ENCODE measurements at regions of chr16 and their contacts with region 1.

Region 1: DNA sequence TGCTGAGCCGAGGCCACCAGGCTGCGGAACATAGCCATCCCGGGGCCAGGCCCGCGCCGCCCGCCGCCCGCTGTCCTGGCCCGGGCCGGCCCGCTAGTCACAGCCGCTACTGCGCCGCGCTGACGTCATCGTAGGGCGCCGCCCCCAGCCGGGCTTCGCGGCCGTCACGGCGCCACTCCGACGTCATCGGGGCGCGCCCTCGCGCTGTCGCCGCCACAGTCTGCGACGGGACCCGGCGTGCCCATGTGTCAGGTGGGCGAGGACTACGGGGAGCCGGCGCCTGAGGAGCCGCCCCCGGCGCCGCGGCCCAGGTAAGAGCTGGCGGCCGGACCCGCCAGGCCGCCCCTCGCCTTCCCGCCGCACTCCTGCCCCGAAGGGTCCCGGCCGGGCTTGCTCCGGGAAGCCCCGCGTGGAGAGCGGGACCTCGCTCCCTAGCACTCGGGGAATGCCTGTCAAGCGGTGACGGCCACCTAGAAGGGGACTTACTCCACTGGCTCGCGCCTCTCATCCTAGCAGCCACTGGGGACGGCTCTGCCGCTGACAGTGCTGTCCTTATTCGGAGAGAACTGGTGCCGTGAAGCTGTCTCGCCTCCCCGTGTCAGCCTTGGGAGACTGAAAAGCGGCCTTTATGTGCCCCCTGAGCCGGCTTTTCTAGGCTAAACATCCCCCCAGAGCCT is at the starts of genes CTU2 and RNF166:
- DNase-seq: peak; percentile 80 to 86
- ATAC-seq: peak; percentile 91 to 92
- H3K4me3 ChIP-seq: peak within 1 kb of the TSS; percentile 68 to 99 (median 81)
- H3K27ac ChIP-seq: peak within 1 kb of the TSS; percentile 80 to 95 (median 88)
- H3K4me1 ChIP-seq: peaks cover 23 to 33% of the 10 kb centered on the region in 2 donors
- H3K27me3 ChIP-seq: no peaks in the 10 kb centered on the region
- CTCF ChIP-seq: peak in 2 of 5 experiments; percentile 43 to 68
- POLR2A ChIP-seq: peak; percentile 96 to 99
- total RNA-seq, gene CTU2: 11.1 to 17.7 (median 14.1) TPM
- total RNA-seq, gene RNF166: 22.9 to 32.5 (median 26.1) TPM

Region 2: DNA sequence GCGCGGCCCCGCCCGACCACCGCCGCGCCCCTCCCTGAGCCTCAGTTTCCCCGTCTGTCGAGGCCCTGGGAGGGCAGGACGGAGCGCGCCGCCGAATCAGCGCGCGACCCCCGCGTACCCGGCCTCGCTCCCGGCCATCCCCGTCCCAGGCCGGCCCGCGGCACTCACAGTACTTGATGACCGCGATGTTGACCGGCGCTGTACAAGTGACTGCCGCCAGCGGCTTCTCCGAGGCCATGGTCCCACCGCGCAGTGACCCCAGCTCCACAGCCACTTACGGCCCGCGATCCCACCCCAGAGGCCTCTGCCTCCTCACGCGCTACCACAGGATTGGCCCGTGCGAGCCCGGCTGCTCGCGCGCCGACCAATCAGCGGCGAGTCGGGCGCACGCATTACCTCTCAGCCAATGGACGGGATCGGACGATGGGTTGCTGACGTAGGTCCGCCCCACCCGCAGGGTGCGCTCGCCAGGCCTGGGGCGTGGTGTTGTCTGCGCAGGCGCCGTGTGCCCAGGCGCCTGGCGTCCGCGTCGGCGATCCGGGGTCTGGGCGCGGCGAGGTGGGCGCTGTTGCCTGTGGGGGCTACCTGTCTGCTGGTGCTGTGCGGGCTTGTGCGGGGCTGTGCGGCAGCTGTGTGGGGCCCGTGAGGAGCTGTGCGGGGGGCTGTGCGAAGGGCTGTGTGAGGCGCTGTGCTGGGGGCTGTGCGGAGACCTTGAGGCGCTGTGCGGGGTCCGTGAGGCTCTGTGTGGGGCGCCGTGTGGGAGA is 43.4 kb before region 1 on chr16 and contains the start of gene MVD:
- in situ Hi-C with region 1: no loop called
- intact Hi-C with region 1: loop called (anchors 1 kb)
- DNase-seq: peak; percentile 97
- ATAC-seq: peak; percentile 96 to 98
- H3K4me3 ChIP-seq: peak within 1 kb of the TSS; percentile 74 to 98 (median 82)
- H3K27ac ChIP-seq: peak within 1 kb of the TSS; percentile 86 to 90 (median 90)
- H3K4me1 ChIP-seq: peaks cover 15 to 23% of the 10 kb centered on the region in 2 donors
- H3K27me3 ChIP-seq: no peaks in the 10 kb centered on the region
- CTCF ChIP-seq: no peak
- POLR2A ChIP-seq: peak; percentile 90 to 92
- total RNA-seq, gene MVD: 9.0 to 16.3 (median 13.4) TPM

Region 3: GRCh38 chr16:88686439-88687253 is 19.8 kb before region 1 on chr16 and contains the start of gene SNAI3:
- in situ Hi-C with region 1: no loop called
- intact Hi-C with region 1: loop called (anchors 2 kb)
- DNase-seq: peak; percentile 78 to 87
- ATAC-seq: peak; percentile 80
- H3K4me3 ChIP-seq: peak within 1 kb of the TSS; percentile 68 to 83 (median 75)
- H3K27ac ChIP-seq: peak within 1 kb of the TSS; percentile 82 to 96 (median 88)
- H3K4me1 ChIP-seq: peaks cover 16 to 31% of the 10 kb centered on the region in 2 donors
- H3K27me3 ChIP-seq: no peaks in the 10 kb centered on the region
- CTCF ChIP-seq: no peak
- POLR2A ChIP-seq: peak; percentile 73 to 75
- total RNA-seq, gene SNAI3: 1.2 to 2.2 (median 1.6) TPM

Region 4: DNA sequence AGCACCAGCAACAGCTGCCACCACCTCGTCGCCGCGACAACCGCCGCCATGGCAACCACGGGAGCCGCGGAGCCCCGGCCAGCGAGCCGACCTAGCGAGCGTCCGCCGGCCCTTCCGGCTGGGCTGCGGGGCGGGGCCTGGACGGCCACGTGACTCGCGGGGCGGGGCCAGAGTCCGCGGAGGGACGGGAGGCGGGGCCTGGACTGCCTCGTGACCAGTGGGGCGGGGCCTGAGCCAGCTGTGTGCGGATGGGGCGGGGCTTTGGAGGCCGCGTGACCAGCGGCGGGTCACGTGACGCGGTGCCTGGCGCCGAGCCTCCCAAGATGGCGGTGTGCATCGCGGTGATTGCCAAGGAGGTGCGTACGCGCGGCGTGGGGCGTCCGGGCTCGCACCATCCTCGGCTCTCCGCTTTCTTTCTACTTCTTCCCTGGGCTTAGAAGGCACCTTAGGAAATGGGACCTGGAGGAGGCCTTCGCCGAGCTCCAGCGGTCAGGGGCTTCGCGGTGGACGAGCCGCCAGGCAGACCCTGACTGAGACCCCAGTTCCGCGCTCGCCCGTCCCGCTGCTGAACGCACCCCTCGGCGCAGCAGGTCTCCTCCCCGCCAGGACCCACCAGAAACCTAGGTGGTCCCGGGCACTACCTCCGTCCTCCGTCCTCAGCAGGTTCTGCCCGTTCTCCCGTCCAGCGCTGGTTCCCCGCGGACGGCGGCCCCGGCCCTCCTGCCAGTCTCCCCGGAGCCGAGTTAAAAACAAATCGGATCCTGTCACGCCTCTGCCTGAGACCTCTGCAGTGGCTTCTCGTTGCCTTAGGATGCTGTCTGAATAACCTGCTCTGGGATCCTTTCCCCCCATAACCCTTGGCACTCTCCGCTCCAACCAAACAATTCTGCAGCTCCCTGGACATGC is 150.7 kb after region 1 on chr16 and contains the starts of genes GALNS and TRAPPC2L:
- in situ Hi-C with region 1: no loop called
- intact Hi-C with region 1: loop called (anchors 10 kb)
- DNase-seq: peak; percentile 97
- ATAC-seq: peak; percentile 92 to 95
- H3K4me3 ChIP-seq: peak within 1 kb of the TSS; percentile 91 to 99 (median 94)
- H3K27ac ChIP-seq: peak within 1 kb of the TSS; percentile 89 to 92 (median 90)
- H3K4me1 ChIP-seq: peaks cover 16 to 17% of the 10 kb centered on the region in 2 donors
- H3K27me3 ChIP-seq: no peaks in the 10 kb centered on the region
- CTCF ChIP-seq: peak in 2 of 5 experiments; percentile 44 to 54
- POLR2A ChIP-seq: peak; percentile 79 to 81
- total RNA-seq, gene GALNS: 8.8 to 14.7 (median 10.0) TPM
- total RNA-seq, gene TRAPPC2L: 17.8 to 27.9 (median 20.5) TPM

Measured in gastrocnemius medialis (tissue), 4 donors.